Naive thymus-derived CD8-positive, alpha-beta T cell (primary cell): ENCODE measurements at regions of chr7 and their contacts with region 1.

Region 1: DNA sequence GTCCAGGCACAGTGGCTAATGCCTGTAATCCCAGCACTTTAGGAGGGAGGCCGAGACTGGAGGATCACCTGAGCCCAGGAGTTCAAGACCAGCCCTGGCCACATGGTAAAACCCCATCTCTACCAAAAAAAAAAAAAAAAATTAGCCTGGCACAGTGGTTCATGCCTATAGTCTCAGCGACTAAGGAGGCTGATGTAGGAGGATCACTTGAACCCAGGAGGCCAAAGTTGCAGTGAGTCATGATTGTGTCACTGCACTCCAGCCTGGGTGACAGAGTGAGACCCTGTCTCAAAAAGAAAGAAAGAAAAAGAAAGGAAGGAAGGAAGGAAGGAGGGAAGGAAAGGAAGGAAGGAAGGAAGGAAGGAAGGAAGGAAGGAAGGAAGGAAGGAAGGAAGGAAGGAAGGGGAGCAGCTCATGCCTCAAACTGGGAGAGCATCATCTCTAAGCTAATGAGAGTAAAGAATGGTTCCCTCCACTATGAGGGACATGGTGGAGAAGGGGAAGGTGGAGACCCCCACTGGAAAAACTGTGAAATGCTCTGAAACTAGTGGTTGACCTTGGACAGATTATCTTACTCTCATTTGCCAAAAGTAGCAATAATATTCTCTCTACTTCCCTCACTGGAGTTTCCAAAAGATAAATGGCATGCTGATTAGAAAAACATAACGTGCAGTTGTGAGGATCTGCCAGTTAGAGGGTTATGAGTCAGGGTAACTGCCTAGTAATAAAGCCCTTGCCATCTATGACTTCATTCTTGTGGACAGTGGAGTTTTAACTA is 16.8 kb downstream of the GIMAP5 start:
- DNase-seq: peak in 1 of 10 donors; percentile 60
- ATAC-seq: peak in 1 of 2 donors; percentile 10
- H3K4me3 Mint-ChIP-seq: peak overlapping the region in 9 of 10 donors; percentile 36 to 78 (median 63)
- H3K27ac Mint-ChIP-seq: peak overlapping the region; percentile 66 to 97 (median 94)
- H3K4me1 Mint-ChIP-seq: peaks cover 35 to 77% (median 71%) of the 10 kb centered on the region in 4 donors
- H3K27me3 Mint-ChIP-seq: peaks cover 0 to 2% (median 0%) of the 10 kb centered on the region in 5 donors

Region 2: GRCh38 chr7:150481186-150481920 is 272.7 kb before region 1 on chr7:
- POLR2A ChIA-PET with region 1: interaction called, 10 read pairs
- DNase-seq: peak; percentile 25 to 76 (median 63)
- ATAC-seq: peak; percentile 51 to 69
- H3K4me3 Mint-ChIP-seq: peak overlapping the region; percentile 71 to 97 (median 88)
- H3K27ac Mint-ChIP-seq: peak overlapping the region; percentile 98 to 100 (median 100)
- H3K4me1 Mint-ChIP-seq: peaks cover 57 to 98% (median 94%) of the 10 kb centered on the region in 4 donors
- H3K27me3 Mint-ChIP-seq: no peaks in the 10 kb centered on the region

Region 3: DNA sequence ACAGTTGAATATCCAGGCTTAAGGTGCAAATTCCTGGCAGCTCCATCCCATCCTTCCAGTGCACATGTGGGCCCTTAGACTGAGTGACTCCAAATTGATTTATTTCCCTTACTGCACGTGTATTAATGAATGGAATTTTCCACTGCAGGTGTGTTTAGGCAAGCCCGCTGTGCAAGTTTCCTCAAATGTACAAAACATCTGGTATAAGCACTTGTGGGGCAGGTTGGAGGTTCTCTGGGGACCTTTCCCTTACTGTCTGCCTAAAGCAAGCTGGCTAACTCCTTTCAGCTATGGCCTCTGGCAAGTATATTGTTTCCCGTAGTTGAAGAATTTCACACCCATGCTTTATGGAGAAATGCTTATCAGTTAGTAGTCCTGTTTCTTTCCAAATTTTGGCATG is 96.5 kb before region 1 on chr7:
- POLR2A ChIA-PET with region 1: no interaction called
- DNase-seq: no peak
- ATAC-seq: no peak
- H3K4me3 Mint-ChIP-seq: no peak overlapping the region
- H3K27ac Mint-ChIP-seq: no peak overlapping the region
- H3K4me1 Mint-ChIP-seq: peaks cover 12 to 53% (median 42%) of the 10 kb centered on the region in 4 donors
- H3K27me3 Mint-ChIP-seq: no peaks in the 10 kb centered on the region

Region 4: DNA sequence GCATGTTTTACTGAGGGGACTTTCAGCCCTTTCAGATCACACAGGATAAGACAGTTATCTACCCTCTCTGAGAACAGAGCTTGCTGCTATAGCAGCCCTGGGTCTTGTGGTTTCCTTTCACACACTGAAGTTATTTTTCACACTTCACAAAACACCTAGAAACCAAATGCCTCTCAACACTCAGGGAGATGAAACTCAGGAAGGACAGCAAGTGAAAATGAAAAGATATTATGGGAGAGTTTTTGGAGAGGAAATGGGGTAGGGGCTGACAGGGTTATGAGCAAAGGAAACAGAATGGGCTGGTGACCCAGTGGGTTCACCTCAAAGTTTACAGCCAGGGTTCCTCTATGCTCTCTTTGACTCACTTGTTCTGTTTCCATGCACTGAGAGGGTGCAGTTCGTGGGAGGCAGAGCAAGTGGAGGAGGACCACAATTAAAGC is 85.5 kb before region 1 on chr7:
- POLR2A ChIA-PET with region 1: interaction called, 15 read pairs
- DNase-seq: peak in 9 of 10 donors; percentile 41 to 86 (median 71)
- ATAC-seq: peak; percentile 79 to 92
- H3K4me3 Mint-ChIP-seq: peak overlapping the region; percentile 60 to 85 (median 78)
- H3K27ac Mint-ChIP-seq: peak overlapping the region; percentile 94 to 100 (median 98)
- H3K4me1 Mint-ChIP-seq: peaks cover 34 to 93% (median 89%) of the 10 kb centered on the region in 4 donors
- H3K27me3 Mint-ChIP-seq: no peaks in the 10 kb centered on the region

Region 5: GRCh38 chr7:150685219-150686029 is 68.6 kb before region 1 on chr7 and contains the start of gene GIMAP2:
- POLR2A ChIA-PET with region 1: interaction called, 41 read pairs
- DNase-seq: peak in 5 of 10 donors; percentile 7 to 68 (median 58)
- ATAC-seq: peak; percentile 71 to 89
- H3K4me3 Mint-ChIP-seq: peak within 1 kb of the TSS; percentile 94 to 100 (median 97)
- H3K27ac Mint-ChIP-seq: peak within 1 kb of the TSS; percentile 95 to 100 (median 98)
- H3K4me1 Mint-ChIP-seq: peaks cover 46 to 93% (median 80%) of the 10 kb centered on the region in 4 donors
- H3K27me3 Mint-ChIP-seq: no peaks in the 10 kb centered on the region
- polyA plus RNA-seq, gene GIMAP2: 89.3 to 102 (median 93.8) TPM

Region 6: DNA sequence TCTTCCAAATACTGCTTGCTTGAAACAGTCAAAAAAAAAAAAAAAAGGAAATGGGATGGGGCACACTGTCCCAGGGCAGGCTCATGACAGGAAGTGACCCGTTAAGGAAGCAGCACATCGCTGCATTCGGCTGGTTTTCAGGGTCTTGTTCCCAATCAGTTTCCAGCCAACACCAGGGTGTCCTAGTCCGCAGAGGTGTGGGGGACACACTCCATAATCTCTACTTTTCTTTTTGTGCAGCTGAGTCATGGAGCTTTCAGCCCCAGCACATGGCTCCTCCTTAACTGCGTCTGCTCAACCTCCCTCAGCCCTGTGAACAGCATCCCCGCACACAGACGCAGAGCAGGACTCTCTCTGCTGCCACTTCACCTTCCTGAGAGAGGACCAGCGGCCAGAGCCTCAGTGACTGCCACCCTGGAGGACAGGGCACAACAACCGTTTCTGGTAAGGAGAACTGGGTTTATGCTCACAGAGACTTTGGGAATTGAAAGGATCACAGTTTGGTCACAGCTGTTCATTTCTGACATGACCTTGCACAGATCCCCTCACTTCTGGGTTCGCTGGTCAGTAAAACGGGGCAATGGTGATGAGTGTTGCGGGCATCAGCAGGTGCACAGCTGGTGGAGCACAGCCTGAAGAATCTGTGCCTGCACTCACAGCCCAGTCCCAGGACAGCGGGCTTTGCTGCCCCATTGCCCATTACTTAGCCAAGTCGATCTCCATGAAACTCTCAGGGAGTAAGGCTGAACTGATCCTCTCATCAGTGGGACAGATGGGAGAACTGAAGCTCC is 16.6 kb before region 1 on chr7 and contains the start of gene GIMAP5:
- POLR2A ChIA-PET with region 1: interaction called, 143 read pairs
- DNase-seq: peak in 6 of 10 donors; percentile 27 to 60 (median 40)
- ATAC-seq: peak; percentile 67 to 76
- H3K4me3 Mint-ChIP-seq: peak within 1 kb of the TSS; percentile 88 to 100 (median 98)
- H3K27ac Mint-ChIP-seq: peak within 1 kb of the TSS; percentile 93 to 100 (median 96)
- H3K4me1 Mint-ChIP-seq: peaks cover 48 to 75% (median 68%) of the 10 kb centered on the region in 4 donors
- H3K27me3 Mint-ChIP-seq: no peaks in the 10 kb centered on the region
- polyA plus RNA-seq, gene GIMAP5: 320 to 506 (median 401) TPM

Region 7: DNA sequence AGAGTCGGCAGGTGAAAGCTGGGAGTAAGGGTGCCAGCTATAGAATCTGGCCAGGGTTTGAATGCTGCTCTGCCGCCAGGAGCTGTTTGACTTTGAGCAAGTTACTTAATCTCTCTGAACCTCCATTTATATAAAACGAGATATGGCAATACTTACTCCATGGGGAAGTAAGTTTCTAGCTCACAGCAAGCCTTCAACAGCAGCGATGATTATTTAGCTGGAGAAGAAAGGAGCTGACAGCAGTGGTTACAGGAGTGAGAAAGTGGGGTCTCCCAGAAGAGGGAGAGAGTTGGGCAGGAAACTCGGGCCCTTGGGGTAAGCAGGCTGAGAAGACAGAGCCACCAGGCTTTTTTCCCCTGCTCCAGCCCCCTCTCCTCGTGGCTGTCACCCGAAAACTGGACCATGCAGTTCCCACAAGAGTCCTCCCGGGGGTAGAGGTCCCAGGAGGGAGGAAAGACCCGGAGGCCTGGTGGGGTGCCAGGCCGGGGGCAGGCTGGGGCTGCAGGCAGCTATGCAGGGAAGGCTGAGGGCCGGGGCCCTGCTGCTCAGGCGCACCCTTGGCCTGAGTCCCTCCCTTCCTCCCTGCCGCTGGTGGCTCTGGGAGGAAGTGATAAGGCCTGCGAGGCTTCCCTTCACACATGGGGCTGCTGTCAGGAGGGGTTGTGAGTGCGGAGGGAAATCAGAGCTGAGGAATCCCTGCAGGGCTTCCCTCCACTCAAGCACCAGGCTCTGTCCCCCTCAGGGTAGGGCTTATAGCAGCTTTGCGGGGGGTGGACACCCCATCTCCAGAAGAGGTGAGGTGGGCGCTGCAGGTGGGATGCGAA is 240.3 kb after region 1 on chr7:
- POLR2A ChIA-PET with region 1: no interaction called
- DNase-seq: no peak
- ATAC-seq: peak; percentile 53 to 73
- H3K4me3 Mint-ChIP-seq: peak overlapping the region in 7 of 10 donors; percentile 32 to 56 (median 39)
- H3K27ac Mint-ChIP-seq: peak overlapping the region in 5 of 10 donors; percentile 25 to 81 (median 71)
- H3K4me1 Mint-ChIP-seq: peaks cover 19 to 53% (median 42%) of the 10 kb centered on the region in 4 donors
- H3K27me3 Mint-ChIP-seq: peaks cover 0 to 7% (median 0%) of the 10 kb centered on the region in 5 donors